ENCODE measurements at regions of chr15 and their contacts with region 1.

Region 1: GRCh38 chr15:78437762-78438302 is at the start of gene IREB2:
- DNase-seq: peak; percentile 96 to 99 (median 99)
- H3K4me3 ChIP-seq: peak within 1 kb of the TSS; percentile 82 to 92
- H3K4me3 Mint-ChIP-seq: peak within 1 kb of the TSS; percentile 94 to 99 (median 96)
- H3K27ac ChIP-seq: peak within 1 kb of the TSS; percentile 90
- H3K27ac Mint-ChIP-seq: peak within 1 kb of the TSS; percentile 93 to 99 (median 96)
- H3K4me1 ChIP-seq: peaks cover 46% of the 10 kb centered on the region
- H3K4me1 Mint-ChIP-seq: peaks cover 27 to 53% (median 41%) of the 10 kb centered on the region in 4 donors
- H3K27me3 ChIP-seq: no peaks in the 10 kb centered on the region
- H3K27me3 Mint-ChIP-seq: no peaks in the 10 kb centered on the region
- total RNA-seq, gene IREB2: 65.0 to 71.9 TPM

Region 2: GRCh38 chr15:78264304-78265136 is 173.3 kb before region 1 on chr15 and contains the start of gene DNAJA4:
- CTCF ChIA-PET with region 1: no interaction called
- POLR2A ChIA-PET with region 1: interaction called, 17 read pairs
- intact Hi-C with region 1: no loop called
- DNase-seq: peak; percentile 67 to 76 (median 73)
- H3K4me3 ChIP-seq: peak within 1 kb of the TSS; percentile 55 to 58
- H3K4me3 Mint-ChIP-seq: peak within 1 kb of the TSS; percentile 88 to 94 (median 89)
- H3K27ac ChIP-seq: peak within 1 kb of the TSS; percentile 63
- H3K27ac Mint-ChIP-seq: peak within 1 kb of the TSS; percentile 87 to 96 (median 91)
- H3K4me1 ChIP-seq: peaks cover 22% of the 10 kb centered on the region
- H3K4me1 Mint-ChIP-seq: peaks cover 19 to 34% (median 22%) of the 10 kb centered on the region in 4 donors
- H3K27me3 ChIP-seq: no peaks in the 10 kb centered on the region
- H3K27me3 Mint-ChIP-seq: no peaks in the 10 kb centered on the region
- total RNA-seq, gene DNAJA4: 31.5 to 32.8 TPM

Region 3: GRCh38 chr15:78422571-78423340 is 15.1 kb before region 1 on chr15:
- CTCF ChIA-PET with region 1: interaction called, 17 read pairs
- POLR2A ChIA-PET with region 1: interaction called, 24 read pairs
- intact Hi-C with region 1: no loop called
- DNase-seq: peak; percentile 54 to 62 (median 61)
- H3K4me3 ChIP-seq: no peak overlapping the region
- H3K4me3 Mint-ChIP-seq: peak overlapping the region in 1 of 8 donors; percentile 27
- H3K27ac ChIP-seq: no peak overlapping the region
- H3K27ac Mint-ChIP-seq: peak overlapping the region in 1 of 7 donors; percentile 3
- H3K4me1 ChIP-seq: peaks cover 17% of the 10 kb centered on the region
- H3K4me1 Mint-ChIP-seq: peaks cover 21 to 32% (median 22%) of the 10 kb centered on the region in 4 donors
- H3K27me3 ChIP-seq: no peaks in the 10 kb centered on the region
- H3K27me3 Mint-ChIP-seq: peaks cover 0 to 5% of the 10 kb centered on the region in 2 donors

Region 4: GRCh38 chr15:78457101-78457500 is 19.3 kb after region 1 on chr15:
- CTCF ChIA-PET with region 1: interaction called, 3 read pairs
- POLR2A ChIA-PET with region 1: interaction called, 38 read pairs
- intact Hi-C with region 1: no loop called
- DNase-seq: no peak
- H3K4me3 ChIP-seq: no peak overlapping the region
- H3K4me3 Mint-ChIP-seq: peak overlapping the region in 5 of 8 donors; percentile 1 to 64 (median 40)
- H3K27ac ChIP-seq: no peak overlapping the region
- H3K27ac Mint-ChIP-seq: peak overlapping the region in 6 of 7 donors; percentile 23 to 74 (median 51)
- H3K4me1 ChIP-seq: peaks cover 87% of the 10 kb centered on the region
- H3K4me1 Mint-ChIP-seq: peaks cover 65 to 96% (median 83%) of the 10 kb centered on the region in 4 donors
- H3K27me3 ChIP-seq: no peaks in the 10 kb centered on the region
- H3K27me3 Mint-ChIP-seq: no peaks in the 10 kb centered on the region

Region 5: DNA sequence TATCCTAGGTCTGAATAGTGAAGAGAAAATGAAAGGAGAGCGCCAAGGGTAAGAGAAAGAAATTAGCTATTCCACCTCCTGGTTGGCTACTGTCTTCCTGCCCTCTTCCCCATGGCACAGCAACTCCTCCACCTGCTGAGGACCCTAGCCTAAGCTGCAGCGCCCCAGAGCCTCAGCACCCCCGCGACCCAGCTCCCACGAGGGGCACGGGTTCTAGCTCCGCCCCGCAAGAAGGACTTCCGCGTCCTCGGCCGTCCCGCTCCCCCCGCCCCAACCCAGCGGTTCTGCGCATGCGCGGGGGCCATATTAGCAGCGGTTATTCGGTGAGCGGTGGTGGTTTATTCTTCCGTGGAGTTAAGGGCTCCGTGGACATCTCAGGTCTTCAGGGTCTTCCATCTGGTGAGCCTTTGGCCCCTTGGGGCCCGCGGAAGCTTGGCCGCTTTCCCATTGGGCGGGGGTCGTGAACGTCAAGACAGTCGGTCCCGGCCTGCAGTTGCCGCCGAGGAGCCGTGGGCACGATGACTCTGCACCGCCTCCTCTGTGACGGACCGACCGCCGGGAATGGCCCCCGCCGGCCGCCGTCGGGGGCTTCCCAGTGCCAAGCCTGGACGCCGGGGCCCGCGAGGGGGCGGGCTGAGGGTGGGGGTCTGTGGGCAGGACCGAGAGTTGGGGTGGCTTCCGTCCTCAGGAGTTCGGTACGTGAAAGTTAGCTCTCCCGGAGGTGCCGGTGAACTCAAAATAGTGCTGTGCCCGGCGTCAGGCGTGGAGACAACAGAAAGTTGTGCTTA is 102.5 kb after region 1 on chr15 and contains the start of gene PSMA4:
- CTCF ChIA-PET with region 1: no interaction called
- POLR2A ChIA-PET with region 1: interaction called, 43 read pairs
- intact Hi-C with region 1: loop called (anchors 1 kb)
- DNase-seq: peak; percentile 92 to 97 (median 94)
- H3K4me3 ChIP-seq: peak within 1 kb of the TSS; percentile 70 to 96
- H3K4me3 Mint-ChIP-seq: peak within 1 kb of the TSS; percentile 92 to 99 (median 98)
- H3K27ac ChIP-seq: peak within 1 kb of the TSS; percentile 97
- H3K27ac Mint-ChIP-seq: peak within 1 kb of the TSS; percentile 89 to 100 (median 99)
- H3K4me1 ChIP-seq: peaks cover 30% of the 10 kb centered on the region
- H3K4me1 Mint-ChIP-seq: peaks cover 17 to 38% (median 27%) of the 10 kb centered on the region in 4 donors
- H3K27me3 ChIP-seq: no peaks in the 10 kb centered on the region
- H3K27me3 Mint-ChIP-seq: no peaks in the 10 kb centered on the region
- total RNA-seq, gene PSMA4: 89.8 to 91.7 TPM

Region 6: GRCh38 chr15:78714890-78715289 is 277.1 kb after region 1 on chr15:
- CTCF ChIA-PET with region 1: no interaction called
- POLR2A ChIA-PET with region 1: no interaction called
- intact Hi-C with region 1: loop called (anchors 5 kb)
- DNase-seq: no peak
- H3K4me3 ChIP-seq: no peak overlapping the region
- H3K4me3 Mint-ChIP-seq: no peak overlapping the region
- H3K27ac ChIP-seq: no peak overlapping the region
- H3K27ac Mint-ChIP-seq: no peak overlapping the region
- H3K4me1 ChIP-seq: no peaks in the 10 kb centered on the region
- H3K4me1 Mint-ChIP-seq: no peaks in the 10 kb centered on the region
- H3K27me3 ChIP-seq: no peaks in the 10 kb centered on the region
- H3K27me3 Mint-ChIP-seq: peaks cover 15 to 23% of the 10 kb centered on the region in 2 donors